Mammary epithelial cell (primary cell): ENCODE measurements at regions of chr19 and their contacts with region 1.

Region 1: GRCh38 chr19:35352448-35353304 is 5.0 kb downstream of the FFAR1 start:
- DNase-seq: peak; percentile 44
- H3K4me3 ChIP-seq: no peak overlapping the region
- H3K27ac ChIP-seq: no peak overlapping the region
- H3K4me1 ChIP-seq: no peaks in the 10 kb centered on the region
- H3K27me3 ChIP-seq: no peaks in the 10 kb centered on the region
- CTCF ChIP-seq: peak; percentile 88 to 89

Region 2: DNA sequence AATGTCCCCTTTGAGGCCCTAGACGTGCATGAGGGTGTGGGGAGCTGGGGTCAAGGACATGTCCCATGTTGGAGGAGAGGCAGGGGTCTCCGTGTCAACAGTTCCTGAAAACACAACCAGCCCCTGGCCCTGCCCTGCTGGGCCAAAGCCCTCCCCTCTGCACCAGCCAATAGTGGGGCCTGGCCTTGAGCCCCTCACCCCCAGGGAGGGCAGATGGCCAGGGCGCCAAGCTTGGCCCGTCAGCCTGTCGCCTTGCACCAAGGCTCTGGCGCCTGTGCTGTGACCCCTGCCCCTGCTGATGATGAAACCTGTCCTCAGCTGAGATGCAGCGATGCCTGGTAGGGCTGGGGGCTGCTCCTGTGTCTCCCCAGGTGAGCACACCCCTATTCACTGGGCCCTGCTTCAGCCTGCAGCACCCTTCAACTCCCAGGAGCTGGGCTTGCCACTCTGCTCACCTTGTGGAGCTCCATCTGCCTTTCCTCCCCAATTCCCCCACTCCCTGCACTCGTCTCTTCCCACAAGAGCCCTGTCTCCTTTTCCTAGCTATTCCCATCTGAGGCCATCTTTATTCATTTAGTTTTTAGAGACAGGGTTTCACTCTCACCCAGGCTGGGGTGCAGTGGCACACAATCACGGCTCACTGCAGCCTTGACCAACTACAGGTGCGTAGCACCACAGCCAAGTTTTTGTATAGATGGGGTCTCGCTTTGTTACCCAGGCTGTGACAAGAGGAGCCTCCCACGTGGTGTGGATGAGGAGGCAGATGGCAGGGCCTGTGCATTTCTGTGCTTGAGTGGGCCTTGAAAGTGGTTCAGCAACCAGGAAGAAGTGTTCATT is 72.5 kb before region 1 on chr19:
- CTCF ChIA-PET with region 1: no interaction called
- dilution Hi-C with region 1: loop called (anchors 5 kb)
- in situ Hi-C with region 1: no loop called
- intact Hi-C with region 1: no loop called
- DNase-seq: no peak
- H3K4me3 ChIP-seq: no peak overlapping the region
- H3K27ac ChIP-seq: no peak overlapping the region
- H3K4me1 ChIP-seq: no peaks in the 10 kb centered on the region
- H3K27me3 ChIP-seq: no peaks in the 10 kb centered on the region
- CTCF ChIP-seq: no peak

Region 3: GRCh38 chr19:35468637-35469036 is 116.0 kb after region 1 on chr19:
- CTCF ChIA-PET with region 1: interaction called, 16 read pairs
- dilution Hi-C with region 1: no loop called
- in situ Hi-C with region 1: loop called (anchors 5 to 10 kb)
- intact Hi-C with region 1: loop called (anchors 1 kb)
- DNase-seq: peak; percentile 24
- H3K4me3 ChIP-seq: no peak overlapping the region
- H3K27ac ChIP-seq: no peak overlapping the region
- H3K4me1 ChIP-seq: no peaks in the 10 kb centered on the region
- H3K27me3 ChIP-seq: no peaks in the 10 kb centered on the region
- CTCF ChIP-seq: peak; percentile 64 to 92

Region 4: DNA sequence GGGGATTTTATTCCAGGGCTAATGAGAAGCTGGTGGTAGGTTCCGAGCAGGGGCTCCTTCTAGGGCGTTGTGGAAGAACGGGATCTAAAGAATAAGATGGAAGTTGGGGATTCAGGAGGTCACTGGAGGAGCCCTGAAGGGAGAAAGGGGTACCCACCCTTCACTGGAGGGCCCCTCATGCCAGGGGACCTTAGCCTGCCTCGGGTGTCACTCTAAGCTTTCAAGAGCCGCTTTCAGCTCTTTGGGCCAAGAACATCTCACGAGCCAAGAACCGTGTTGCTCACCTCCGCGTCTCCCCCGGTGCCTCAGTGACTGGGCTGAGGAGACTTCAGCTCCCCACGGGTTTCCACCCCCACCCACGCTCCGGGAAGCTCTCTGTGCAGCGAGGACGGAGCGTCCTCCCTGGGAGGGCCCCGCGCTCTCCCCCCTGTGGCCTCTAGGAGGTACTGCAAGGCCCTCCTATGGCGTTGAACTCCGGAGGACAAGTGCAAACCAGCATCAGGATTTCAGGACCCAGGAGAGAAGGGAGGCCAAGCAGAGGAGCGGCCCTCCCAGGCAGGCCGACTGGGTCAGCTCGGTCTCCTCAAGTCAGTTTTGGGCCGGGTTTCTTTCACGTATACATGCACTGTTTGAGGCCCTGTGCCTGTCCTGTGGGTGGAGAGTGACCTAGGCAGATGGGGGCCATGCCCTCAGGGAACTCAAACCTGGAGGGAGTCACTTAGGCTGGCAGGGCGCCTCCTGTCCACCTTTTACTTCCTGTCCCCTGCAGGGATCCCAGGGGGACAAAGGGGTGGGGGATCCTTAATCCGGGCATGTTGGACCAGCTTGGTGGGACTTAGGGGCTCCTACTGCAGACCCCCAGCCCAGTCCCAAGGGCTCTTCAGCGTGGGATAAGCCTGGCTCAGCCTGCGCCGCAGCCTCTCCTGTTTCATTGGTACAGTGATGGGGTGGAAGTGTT is 142.7 kb after region 1 on chr19:
- CTCF ChIA-PET with region 1: no interaction called
- dilution Hi-C with region 1: no loop called
- in situ Hi-C with region 1: no loop called
- intact Hi-C with region 1: loop called (anchors 1 kb)
- DNase-seq: peak; percentile 57
- H3K4me3 ChIP-seq: peak overlapping the region in 1 of 3 experiments; percentile 9
- H3K27ac ChIP-seq: no peak overlapping the region
- H3K4me1 ChIP-seq: peaks cover 6% of the 10 kb centered on the region
- H3K27me3 ChIP-seq: peaks cover 3% of the 10 kb centered on the region
- CTCF ChIP-seq: peak; percentile 94 to 99

Region 5: DNA sequence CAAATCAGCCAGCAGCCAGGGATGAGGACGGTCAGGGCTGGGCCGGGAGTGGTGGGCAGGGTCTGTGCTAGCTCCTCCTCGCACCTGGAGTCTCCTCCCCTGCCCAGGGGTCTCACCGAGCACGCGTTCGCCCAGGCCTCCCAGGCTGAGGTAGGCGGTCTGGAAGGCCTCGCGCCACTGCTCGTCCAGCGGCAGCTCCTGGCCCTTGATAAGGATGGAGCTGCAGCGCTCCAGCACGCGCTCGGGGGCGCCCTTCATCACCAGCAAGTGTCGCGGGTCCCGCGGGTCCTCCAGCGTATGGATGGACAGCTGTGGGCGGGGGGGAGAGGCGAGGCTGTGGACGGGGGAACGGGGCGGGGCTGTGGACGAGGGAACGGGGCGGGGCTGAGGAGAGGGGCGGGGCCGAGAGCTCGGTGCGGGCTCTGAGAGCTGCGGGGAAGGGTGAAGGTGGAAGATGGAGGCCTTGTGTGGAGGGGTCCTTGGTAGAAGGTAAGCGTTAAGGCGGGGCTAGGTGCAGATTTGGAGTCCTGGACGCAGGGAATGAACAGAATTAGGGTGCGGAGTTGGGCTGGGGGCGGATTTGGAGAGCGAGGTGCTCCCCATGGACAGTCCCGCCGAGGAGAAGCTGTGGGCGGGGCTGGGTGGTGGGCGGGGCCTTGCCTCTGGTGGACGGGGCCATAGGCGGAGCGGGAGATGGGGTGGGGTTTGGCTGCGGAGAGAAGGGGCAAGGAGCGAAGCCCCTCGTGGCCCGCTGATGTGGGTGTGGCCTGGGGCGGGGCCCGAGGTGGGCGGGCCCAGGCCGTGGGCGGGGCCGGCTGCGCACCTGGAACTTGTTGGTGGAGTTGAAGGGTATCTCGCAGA is 205.1 kb after region 1 on chr19:
- CTCF ChIA-PET with region 1: no interaction called
- dilution Hi-C with region 1: loop called (anchors 5 kb)
- in situ Hi-C with region 1: no loop called
- intact Hi-C with region 1: no loop called
- DNase-seq: peak; percentile 52
- H3K4me3 ChIP-seq: peak overlapping the region; percentile 36 to 44 (median 43)
- H3K27ac ChIP-seq: no peak overlapping the region
- H3K4me1 ChIP-seq: peaks cover 10% of the 10 kb centered on the region
- H3K27me3 ChIP-seq: no peaks in the 10 kb centered on the region
- CTCF ChIP-seq: no peak

Region 6: GRCh38 chr19:35716801-35717666 is 364.4 kb after region 1 on chr19:
- CTCF ChIA-PET with region 1: no interaction called
- dilution Hi-C with region 1: no loop called
- in situ Hi-C with region 1: no loop called
- intact Hi-C with region 1: loop called (anchors 10 kb)
- DNase-seq: peak; percentile 79
- H3K4me3 ChIP-seq: peak overlapping the region; percentile 90 to 94 (median 91)
- H3K27ac ChIP-seq: peak overlapping the region; percentile 52
- H3K4me1 ChIP-seq: peaks cover 23% of the 10 kb centered on the region
- H3K27me3 ChIP-seq: no peaks in the 10 kb centered on the region
- CTCF ChIP-seq: peak; percentile 55 to 79